ENCODE measurements at regions of chr1 and their contacts with region 1.

Region 1: DNA sequence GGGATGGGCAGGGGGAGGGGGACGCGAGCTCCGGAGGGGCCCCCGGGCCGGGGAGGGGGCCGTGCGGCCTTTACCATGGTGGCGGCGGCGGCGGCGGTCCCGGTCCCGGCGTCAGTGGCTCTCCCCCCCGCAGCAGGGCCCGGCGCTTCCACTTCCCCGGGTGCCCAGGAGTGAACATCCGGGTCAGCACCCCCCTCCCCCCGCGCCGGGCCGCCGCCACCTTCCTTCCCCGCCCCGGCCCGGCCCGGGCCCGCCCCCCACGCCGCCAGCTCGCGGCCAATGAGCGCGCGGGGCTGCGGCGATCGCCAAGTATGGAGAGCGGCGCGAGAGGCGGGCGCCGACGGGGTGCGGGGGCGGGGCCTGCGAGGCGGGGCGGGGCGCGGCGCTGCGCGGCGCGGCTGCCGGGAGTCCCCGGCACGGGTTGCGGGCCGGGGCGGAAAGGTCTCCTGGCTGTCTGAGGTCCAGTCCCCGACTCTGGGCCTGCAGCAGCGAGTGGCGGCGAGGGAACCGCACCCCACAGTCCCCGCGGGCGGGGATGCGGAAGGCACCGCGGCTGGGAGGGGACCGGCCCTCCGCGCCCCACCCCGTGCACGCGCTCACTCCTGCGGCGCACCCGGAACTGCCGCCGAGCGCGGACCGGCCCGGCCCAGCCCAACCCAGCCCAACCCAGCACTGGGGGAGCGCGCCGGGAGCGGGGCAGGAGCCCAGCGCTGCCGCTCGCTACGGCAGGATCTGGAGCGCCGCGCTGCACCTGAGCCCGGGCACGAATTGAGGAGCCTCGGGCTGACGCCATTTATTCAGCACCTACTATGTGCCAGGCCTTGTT is at the start of gene CAPZB:
- DNase-seq: peak; percentile 94
- ATAC-seq: peak; percentile 93
- H3K4me3 ChIP-seq: peak within 1 kb of the TSS; percentile 72 to 94 (median 89)
- H3K4me3 Mint-ChIP-seq: peak within 1 kb of the TSS; percentile 89
- H3K27ac ChIP-seq: peak within 1 kb of the TSS; percentile 81 to 90
- H3K27ac Mint-ChIP-seq: peak within 1 kb of the TSS; percentile 95
- H3K4me1 ChIP-seq: peaks cover 52 to 62% of the 10 kb centered on the region in 2 donors
- H3K4me1 Mint-ChIP-seq: peaks cover 64% of the 10 kb centered on the region
- H3K27me3 ChIP-seq: no peaks in the 10 kb centered on the region
- H3K27me3 Mint-ChIP-seq: no peaks in the 10 kb centered on the region
- CTCF ChIP-seq: no peak
- total RNA-seq, gene CAPZB: 193 and 201 TPM in 2 replicates

Region 2: DNA sequence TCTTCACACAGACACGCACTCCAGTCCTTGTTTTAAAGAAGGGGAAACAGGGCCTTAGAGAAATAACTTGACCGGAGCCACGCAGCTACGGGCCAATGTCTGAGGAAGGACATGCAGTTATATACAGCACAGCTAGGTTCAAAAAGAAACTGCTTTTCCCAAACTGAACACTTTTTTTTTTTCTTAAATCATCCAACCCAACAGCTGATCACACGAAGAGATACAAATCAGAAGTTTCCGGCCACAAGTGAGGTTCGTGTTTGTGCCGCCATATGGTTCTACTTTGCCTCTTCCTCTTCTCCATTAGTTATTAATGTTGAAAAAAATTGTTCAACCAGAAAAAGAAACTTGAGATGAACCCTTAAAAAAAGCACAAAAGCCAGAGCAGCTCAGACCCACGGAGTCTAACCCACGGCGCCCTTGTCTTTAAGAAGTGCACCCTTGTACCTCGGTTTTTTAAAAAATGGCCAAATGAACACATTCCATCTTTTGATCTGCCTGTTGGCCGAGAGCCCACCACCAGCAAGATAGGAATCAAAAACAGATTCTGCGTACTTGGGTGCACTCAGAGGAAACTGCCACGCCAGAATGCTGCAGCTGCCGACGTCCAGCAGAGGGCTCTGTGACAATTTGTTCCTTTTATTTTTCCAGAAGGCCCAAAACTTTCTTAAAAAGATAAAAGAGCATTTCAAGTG is 94.5 kb before region 1 on chr1:
- CTCF ChIA-PET with region 1: interaction called, 5 read pairs
- POLR2A ChIA-PET with region 1: interaction called, 9 read pairs
- intact Hi-C with region 1: loop called (anchors 1 kb)
- DNase-seq: peak; percentile 85
- ATAC-seq: peak; percentile 78
- H3K4me3 ChIP-seq: peak overlapping the region; percentile 1 to 50 (median 43)
- H3K4me3 Mint-ChIP-seq: peak overlapping the region; percentile 87
- H3K27ac ChIP-seq: peak overlapping the region; percentile 74 to 84
- H3K27ac Mint-ChIP-seq: peak overlapping the region; percentile 93
- H3K4me1 ChIP-seq: peaks cover 42 to 72% of the 10 kb centered on the region in 2 donors
- H3K4me1 Mint-ChIP-seq: peaks cover 77% of the 10 kb centered on the region
- H3K27me3 ChIP-seq: no peaks in the 10 kb centered on the region
- H3K27me3 Mint-ChIP-seq: no peaks in the 10 kb centered on the region
- CTCF ChIP-seq: peak; percentile 81

Region 3: DNA sequence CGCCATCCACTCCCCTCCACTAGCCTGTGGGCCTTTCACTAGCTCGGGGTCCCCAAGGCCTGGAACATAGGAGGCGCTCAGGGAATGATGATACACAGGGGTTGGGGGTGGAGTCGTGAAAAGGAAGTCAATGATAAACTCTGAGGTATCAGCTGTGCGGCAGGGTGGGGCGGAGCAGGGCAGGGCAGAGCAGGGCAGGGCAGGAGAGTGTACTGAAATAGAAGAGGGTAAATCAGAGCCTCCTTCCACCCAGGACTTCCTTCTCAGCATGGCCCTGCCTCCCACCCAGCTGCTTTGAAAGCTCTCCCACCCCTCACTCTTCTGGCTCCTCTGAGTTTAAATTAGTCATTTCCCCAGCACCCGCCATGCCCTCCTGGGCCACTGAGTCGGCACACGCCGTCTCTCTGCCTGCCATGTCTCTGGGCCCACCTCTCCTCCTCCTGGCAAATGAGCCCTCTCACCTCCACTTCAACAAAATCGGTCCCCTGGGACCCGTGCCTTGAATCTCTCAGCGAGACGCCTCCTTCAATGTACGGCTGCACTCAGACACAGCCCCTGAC is 17.1 kb before region 1 on chr1:
- CTCF ChIA-PET with region 1: interaction called, 10 read pairs
- POLR2A ChIA-PET with region 1: interaction called, 10 read pairs
- intact Hi-C with region 1: loop called (anchors 1 kb)
- DNase-seq: peak; percentile 81
- ATAC-seq: peak; percentile 80
- H3K4me3 ChIP-seq: peak overlapping the region; percentile 14 to 66 (median 38)
- H3K4me3 Mint-ChIP-seq: peak overlapping the region; percentile 84
- H3K27ac ChIP-seq: peak overlapping the region; percentile 79 to 83
- H3K27ac Mint-ChIP-seq: peak overlapping the region; percentile 97
- H3K4me1 ChIP-seq: peaks cover 78 to 95% of the 10 kb centered on the region in 2 donors
- H3K4me1 Mint-ChIP-seq: peaks cover 89% of the 10 kb centered on the region
- H3K27me3 ChIP-seq: no peaks in the 10 kb centered on the region
- H3K27me3 Mint-ChIP-seq: no peaks in the 10 kb centered on the region
- CTCF ChIP-seq: no peak

Region 4: GRCh38 chr1:19582302-19582701 is 96.7 kb after region 1 on chr1:
- CTCF ChIA-PET with region 1: interaction called, 51 read pairs
- POLR2A ChIA-PET with region 1: interaction called, 5 read pairs
- intact Hi-C with region 1: loop called (anchors 1 kb)
- DNase-seq: peak; percentile 80
- ATAC-seq: peak; percentile 87
- H3K4me3 ChIP-seq: no peak overlapping the region
- H3K4me3 Mint-ChIP-seq: no peak overlapping the region
- H3K27ac ChIP-seq: no peak overlapping the region
- H3K27ac Mint-ChIP-seq: no peak overlapping the region
- H3K4me1 ChIP-seq: peaks cover 4 to 8% of the 10 kb centered on the region in 2 donors
- H3K4me1 Mint-ChIP-seq: peaks cover 8% of the 10 kb centered on the region
- H3K27me3 ChIP-seq: no peaks in the 10 kb centered on the region
- H3K27me3 Mint-ChIP-seq: peaks cover 7% of the 10 kb centered on the region
- CTCF ChIP-seq: peak; percentile 72

Region 5: GRCh38 chr1:19651141-19651737 is 165.7 kb after region 1 on chr1:
- CTCF ChIA-PET with region 1: no interaction called
- POLR2A ChIA-PET with region 1: no interaction called
- intact Hi-C with region 1: loop called (anchors 5 kb)
- DNase-seq: peak; percentile 57
- ATAC-seq: peak; percentile 48
- H3K4me3 ChIP-seq: no peak overlapping the region
- H3K4me3 Mint-ChIP-seq: no peak overlapping the region
- H3K27ac ChIP-seq: no peak overlapping the region
- H3K27ac Mint-ChIP-seq: no peak overlapping the region
- H3K4me1 ChIP-seq: peaks cover 0 to 6% of the 10 kb centered on the region in 2 donors
- H3K4me1 Mint-ChIP-seq: peaks cover 2% of the 10 kb centered on the region
- H3K27me3 ChIP-seq: peaks cover 0 to 16% (median 1%) of the 10 kb centered on the region in 4 experiments
- H3K27me3 Mint-ChIP-seq: peaks cover 28% of the 10 kb centered on the region
- CTCF ChIP-seq: peak; percentile 54